ENCODE measurements at regions of chr2 and their contacts with region 1.

Region 1: GRCh38 chr2:207710814-207711740 is at the start of gene CCNYL1:
- DNase-seq: peak; percentile 99

Region 2: GRCh38 chr2:207692206-207693065 is 18.6 kb before region 1 on chr2:
- CTCF ChIA-PET with region 1: interaction called, 13 read pairs
- POLR2A ChIA-PET with region 1: interaction called, 3 read pairs
- DNase-seq: peak; percentile 61

Region 3: GRCh38 chr2:207782238-207783030 is 71.4 kb after region 1 on chr2:
- CTCF ChIA-PET with region 1: no interaction called
- POLR2A ChIA-PET with region 1: no interaction called
- DNase-seq: no peak

Measured in HEK293T (cell line).